K562 (cell line): ENCODE measurements at regions of chr10 and their contacts with region 1.

Region 1: DNA sequence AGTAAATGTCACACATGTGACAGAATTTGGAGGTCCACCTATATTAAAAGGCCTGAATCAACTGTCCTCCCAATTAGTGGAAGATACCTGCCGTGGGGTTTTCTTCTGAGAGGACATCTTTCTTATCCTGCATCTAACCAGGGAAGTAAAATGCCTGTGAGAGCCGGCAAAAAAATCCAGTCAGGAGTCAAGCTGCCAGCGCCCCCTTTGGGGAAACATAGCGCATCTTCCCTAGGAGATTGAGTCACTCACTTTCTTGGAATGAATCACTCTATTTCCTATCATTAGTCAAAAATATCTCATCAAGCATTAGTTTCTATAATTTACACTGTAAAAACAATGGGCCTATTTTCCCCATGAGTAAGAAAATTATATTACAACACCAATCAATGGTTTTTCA is 66.4 kb upstream of the ANK3 start:
- DNase-seq: peak in 2 of 4 experiments; percentile 27 to 34
- ATAC-seq: peak; percentile 64; the same call in 1 of the 3 replicates
- H3K4me3 ChIP-seq: no peak overlapping the region
- H3K27ac ChIP-seq: no peak overlapping the region
- H3K4me1 ChIP-seq: no peaks in the 10 kb centered on the region
- H3K27me3 ChIP-seq: peaks cover 6 to 11% of the 10 kb centered on the region in 2 experiments
- CTCF ChIP-seq: peak; percentile 35 to 53 (median 49)
- EP300 ChIP-seq: no peak
- POLR2A ChIP-seq: no peak
- RAD21 ChIP-seq: peak in 1 of 2 experiments; percentile 48; a peak in 2 of 4 replicates

Region 2: GRCh38 chr10:60271319-60272040 is 184.6 kb before region 1 on chr10:
- CTCF ChIA-PET with region 1: no interaction called
- POLR2A ChIA-PET with region 1: no interaction called
- in situ Hi-C with region 1: no loop called
- intact Hi-C with region 1: no loop called
- DNase-seq: no peak
- ATAC-seq: peak; percentile 39; the same call in 1 of the 3 replicates
- H3K4me3 ChIP-seq: no peak overlapping the region
- H3K27ac ChIP-seq: no peak overlapping the region
- H3K4me1 ChIP-seq: peaks cover 3% of the 10 kb centered on the region in 2 experiments; a peak in 1 of 5 replicates
- H3K27me3 ChIP-seq: no peaks in the 10 kb centered on the region
- CTCF ChIP-seq: no peak
- EP300 ChIP-seq: no peak
- POLR2A ChIP-seq: no peak
- RAD21 ChIP-seq: no peak

Region 3: GRCh38 chr10:60757420-60757895 is 301.4 kb after region 1 on chr10:
- CTCF ChIA-PET with region 1: no interaction called
- POLR2A ChIA-PET with region 1: no interaction called
- in situ Hi-C with region 1: loop called (anchors 10 kb)
- intact Hi-C with region 1: no loop called
- DNase-seq: no peak
- ATAC-seq: no peak; the same call in 2 of the 3 replicates
- H3K4me3 ChIP-seq: no peak overlapping the region
- H3K27ac ChIP-seq: no peak overlapping the region
- H3K4me1 ChIP-seq: no peaks in the 10 kb centered on the region
- H3K27me3 ChIP-seq: peaks cover 4 to 22% of the 10 kb centered on the region in 2 experiments; a peak in 4 of 5 replicates
- CTCF ChIP-seq: no peak
- EP300 ChIP-seq: no peak
- POLR2A ChIP-seq: no peak
- RAD21 ChIP-seq: no peak

Region 4: GRCh38 chr10:60769406-60769805 is 313.4 kb after region 1 on chr10:
- CTCF ChIA-PET with region 1: no interaction called
- POLR2A ChIA-PET with region 1: no interaction called
- in situ Hi-C with region 1: no loop called
- intact Hi-C with region 1: loop called (anchors 5 kb)
- DNase-seq: no peak
- ATAC-seq: no peak; the same call in 2 of the 3 replicates
- H3K4me3 ChIP-seq: no peak overlapping the region
- H3K27ac ChIP-seq: no peak overlapping the region
- H3K4me1 ChIP-seq: no peaks in the 10 kb centered on the region
- H3K27me3 ChIP-seq: peaks cover 0 to 10% of the 10 kb centered on the region in 2 experiments; a peak in 2 of 5 replicates
- CTCF ChIP-seq: no peak
- EP300 ChIP-seq: no peak
- POLR2A ChIP-seq: no peak
- RAD21 ChIP-seq: no peak